GM23248 (cell line): ENCODE measurements at regions of chr7 and their contacts with region 1.

Region 1: GRCh38 chr7:74070619-74070921 is 13.0 kb upstream of the LIMK1 start:
- DNase-seq: peak; percentile 39
- H3K4me3 ChIP-seq: no peak overlapping the region
- H3K27ac ChIP-seq: no peak overlapping the region
- H3K4me1 ChIP-seq: no peaks in the 10 kb centered on the region
- H3K27me3 ChIP-seq: no peaks in the 10 kb centered on the region

Region 2: DNA sequence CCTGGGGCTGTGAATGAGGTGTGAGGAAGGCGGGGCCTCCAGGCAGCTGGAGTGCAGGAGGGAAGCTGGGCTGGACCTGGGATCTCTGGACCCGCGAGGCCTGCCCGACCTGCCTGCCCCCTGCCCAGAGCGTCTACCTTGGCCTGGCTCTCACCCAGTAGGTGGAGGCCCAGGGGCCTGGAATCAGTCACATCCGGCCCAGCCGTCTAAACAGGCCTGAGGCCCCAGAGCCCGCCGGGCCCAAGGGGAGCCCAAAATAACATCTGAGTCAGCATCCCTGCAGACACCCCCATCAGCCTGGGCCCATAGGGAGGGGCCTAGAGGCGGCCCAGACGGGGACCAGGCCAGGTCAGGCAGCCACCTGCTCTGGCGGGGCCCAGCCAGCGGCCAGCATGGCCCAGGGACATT is 57.7 kb before region 1 on chr7:
- in situ Hi-C with region 1: no loop called
- DNase-seq: no peak
- H3K4me3 ChIP-seq: no peak overlapping the region
- H3K27ac ChIP-seq: no peak overlapping the region
- H3K4me1 ChIP-seq: no peaks in the 10 kb centered on the region
- H3K27me3 ChIP-seq: no peaks in the 10 kb centered on the region

Region 3: GRCh38 chr7:74183613-74184450 is 113.3 kb after region 1 on chr7:
- in situ Hi-C with region 1: loop called (anchors 10 kb)
- DNase-seq: peak; percentile 33
- H3K4me3 ChIP-seq: no peak overlapping the region
- H3K27ac ChIP-seq: peak overlapping the region; percentile 34; the same call in 1 of the 2 replicates
- H3K4me1 ChIP-seq: peaks cover 71% of the 10 kb centered on the region
- H3K27me3 ChIP-seq: no peaks in the 10 kb centered on the region